ENCODE measurements at regions of chr12 and their contacts with region 1.

Region 1: GRCh38 chr12:21276826-21277225 is 57.9 kb downstream of the SLCO1A2 start:
- DNase-seq: no peak
- ATAC-seq: no peak
- H3K4me3 Mint-ChIP-seq: no peak overlapping the region
- H3K27ac Mint-ChIP-seq: no peak overlapping the region
- H3K4me1 Mint-ChIP-seq: no peaks in the 10 kb centered on the region
- H3K27me3 Mint-ChIP-seq: no peaks in the 10 kb centered on the region
- CTCF ChIP-seq: no peak

Region 2: DNA sequence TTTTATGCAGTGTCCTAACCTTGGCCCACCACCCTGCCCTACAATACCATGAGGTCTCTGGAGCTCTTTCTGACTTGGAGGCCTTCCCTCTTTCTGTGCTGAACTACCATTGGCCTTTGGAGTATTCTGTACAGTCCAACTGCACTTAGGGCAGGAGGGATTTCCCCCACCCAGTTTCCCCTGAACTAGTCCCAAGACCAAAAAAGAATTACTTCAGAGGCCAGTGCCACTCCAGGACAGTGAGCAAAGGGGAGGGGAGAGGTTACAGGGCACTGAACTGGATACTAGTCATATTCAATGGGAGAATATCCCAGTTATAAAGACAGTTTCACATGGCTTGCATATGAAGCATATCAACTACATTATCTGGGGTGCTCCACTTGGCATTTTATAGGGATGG is 51.8 kb after region 1 on chr12:
- CTCF ChIA-PET with region 1: no interaction called
- POLR2A ChIA-PET with region 1: no interaction called
- intact Hi-C with region 1: loop called (anchors 2 kb)
- DNase-seq: no peak
- ATAC-seq: no peak
- H3K4me3 Mint-ChIP-seq: no peak overlapping the region
- H3K27ac Mint-ChIP-seq: no peak overlapping the region
- H3K4me1 Mint-ChIP-seq: no peaks in the 10 kb centered on the region
- H3K27me3 Mint-ChIP-seq: no peaks in the 10 kb centered on the region
- CTCF ChIP-seq: no peak

Region 3: DNA sequence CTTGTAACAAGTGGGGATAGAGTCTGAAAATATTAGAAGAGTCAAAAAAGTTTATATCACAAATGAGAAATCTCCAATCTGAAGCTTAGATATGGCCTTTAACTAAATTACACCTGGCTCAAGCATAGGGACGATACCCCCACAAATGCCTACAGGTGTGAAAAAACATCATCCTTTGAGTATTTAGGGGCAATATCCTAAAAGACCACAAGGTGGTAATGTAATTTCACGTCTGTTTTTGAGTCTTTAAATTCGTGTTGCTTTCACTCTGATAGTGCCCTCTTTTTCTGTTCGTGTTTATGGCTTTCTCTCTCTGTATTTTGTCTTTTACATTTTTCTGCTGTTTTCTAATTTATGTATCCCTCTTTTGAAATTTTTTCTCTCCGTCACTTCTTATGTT is 1432.5 kb after region 1 on chr12:
- CTCF ChIA-PET with region 1: no interaction called
- POLR2A ChIA-PET with region 1: no interaction called
- intact Hi-C with region 1: no loop called
- DNase-seq: no peak
- ATAC-seq: no peak
- H3K4me3 Mint-ChIP-seq: no peak overlapping the region
- H3K27ac Mint-ChIP-seq: no peak overlapping the region
- H3K4me1 Mint-ChIP-seq: peaks cover 4% of the 10 kb centered on the region
- H3K27me3 Mint-ChIP-seq: peaks cover 4% of the 10 kb centered on the region
- CTCF ChIP-seq: no peak